Left cardiac atrium (tissue), 4 donors: ENCODE measurements at regions of chr5 and their contacts with region 1.

Region 1: DNA sequence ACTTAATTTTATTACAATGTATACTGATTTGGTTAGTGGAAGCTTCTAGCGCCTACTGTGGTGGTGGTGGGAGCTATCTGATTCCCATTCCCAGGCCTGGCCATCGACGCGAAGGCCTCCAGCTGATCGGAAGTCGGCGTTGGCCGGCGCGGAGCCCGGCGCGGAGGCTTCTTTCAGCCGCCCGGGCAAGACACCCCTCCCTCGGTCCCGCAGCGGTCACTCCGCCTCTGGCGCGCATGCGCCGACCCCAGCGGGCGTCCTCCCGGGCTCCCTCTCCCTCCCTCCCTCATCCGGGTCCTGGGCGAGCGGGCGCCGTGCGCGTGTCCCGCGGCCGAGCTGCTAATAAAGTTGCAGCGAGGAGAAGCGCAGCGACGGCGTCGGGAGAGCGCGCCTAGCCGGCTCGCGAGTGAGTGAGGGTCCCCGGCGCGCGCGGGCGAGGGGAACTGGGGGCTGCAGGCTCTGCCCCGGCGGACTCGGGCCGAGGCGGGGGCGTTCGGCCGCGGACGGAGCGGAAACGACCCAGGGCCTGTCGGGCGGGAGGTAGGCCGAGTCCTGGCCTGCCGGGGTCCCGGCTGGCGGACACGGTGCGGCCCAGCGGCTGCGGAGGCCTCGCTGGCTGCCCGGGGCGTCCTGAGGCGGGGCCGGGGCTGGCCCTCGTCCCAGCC is at the start of gene SMAD5:
- DNase-seq: peak; percentile 97
- ATAC-seq: peak; percentile 99
- total RNA-seq, gene SMAD5: 43.1 to 50.8 TPM

Region 2: GRCh38 chr5:135053278-135053677 is 1079.4 kb before region 1 on chr5:
- intact Hi-C with region 1: no loop called
- DNase-seq: no peak
- ATAC-seq: no peak

Region 3: DNA sequence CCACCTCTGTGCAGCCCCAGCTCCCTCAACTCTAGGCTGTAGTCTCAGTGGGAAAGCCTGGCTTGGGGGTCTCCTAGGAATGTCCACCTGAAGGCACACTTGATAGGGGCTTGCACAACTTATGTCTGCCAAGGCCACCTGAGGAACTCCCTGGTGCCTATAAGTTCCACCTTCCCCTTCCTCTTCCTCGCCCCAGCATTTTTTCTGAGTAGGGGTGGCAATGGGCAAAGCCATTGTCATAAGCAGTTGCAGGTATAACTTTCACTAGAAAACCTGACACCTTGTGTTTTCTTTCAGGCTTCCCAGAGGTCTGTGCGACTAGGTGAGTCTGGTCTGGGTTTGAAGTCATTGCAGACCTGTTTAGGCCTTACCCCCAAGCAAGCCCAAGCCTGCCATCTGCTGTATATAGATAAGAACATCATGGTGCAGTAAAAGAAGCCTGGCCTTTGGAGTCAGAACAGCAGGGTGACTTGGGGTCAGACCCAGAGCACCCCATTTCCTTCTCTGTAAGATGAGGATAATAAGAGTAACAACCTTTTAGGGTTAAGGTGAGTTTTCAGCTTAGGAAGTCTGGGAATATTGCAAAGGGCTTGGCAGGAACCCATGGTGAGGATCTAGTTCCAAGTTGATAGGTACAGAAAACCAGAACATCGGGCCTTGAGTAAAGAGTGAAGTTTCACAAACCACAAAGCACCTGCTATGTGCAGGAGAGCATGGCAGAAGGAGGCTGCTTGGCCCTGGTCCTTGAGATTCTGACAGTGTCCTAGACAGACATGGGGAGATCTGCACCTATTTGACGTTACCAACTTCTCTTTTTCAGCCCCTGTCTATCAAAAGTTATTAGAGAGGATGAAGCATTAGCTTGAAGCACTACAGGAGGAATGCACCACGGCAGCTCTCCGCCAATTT is 70.1 kb before region 1 on chr5:
- intact Hi-C with region 1: no loop called
- DNase-seq: no peak
- ATAC-seq: no peak

Region 4: GRCh38 chr5:136087961-136088871 is 44.5 kb before region 1 on chr5:
- intact Hi-C with region 1: loop called in 1 of 2 experiments (anchors 5 kb)
- DNase-seq: peak; percentile 91
- ATAC-seq: peak; percentile 96 to 97

Region 5: DNA sequence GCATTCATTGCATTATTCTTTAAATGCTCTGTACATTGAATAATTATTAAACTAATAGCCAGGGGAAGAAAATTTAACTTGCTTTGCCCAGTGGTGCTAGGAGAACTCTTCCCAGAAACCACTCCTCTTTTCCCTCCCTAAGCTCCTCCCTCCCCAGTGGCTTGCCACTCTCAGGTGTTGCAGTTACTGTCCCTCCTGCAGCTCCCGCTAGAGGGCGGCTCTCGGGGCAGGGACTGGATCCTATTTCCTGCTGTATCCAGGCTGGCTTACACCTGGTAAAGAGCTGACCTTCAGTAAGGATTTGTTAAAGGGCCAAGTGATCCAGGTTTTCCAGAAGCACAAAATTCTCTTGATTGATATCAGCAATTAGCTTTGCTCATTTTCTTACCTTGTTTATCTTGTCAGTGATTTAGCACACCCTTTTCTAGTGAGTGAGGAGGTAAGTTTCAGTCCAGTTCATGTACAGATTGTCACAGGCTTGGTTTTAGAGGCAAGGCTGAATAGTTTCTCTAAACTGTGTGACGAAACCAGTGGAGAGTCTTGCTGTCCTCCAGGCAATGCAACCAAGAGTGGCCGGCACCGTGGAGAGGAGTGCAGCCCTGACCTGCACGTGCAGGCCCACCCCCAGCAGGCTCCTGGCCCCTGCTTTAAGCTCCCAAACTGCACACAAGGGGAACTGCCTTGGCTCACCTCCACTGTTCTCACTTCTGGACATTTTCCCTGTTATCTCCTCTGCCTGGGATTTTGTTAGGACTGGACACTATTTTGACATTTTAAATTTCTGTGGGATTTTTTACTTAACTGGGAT is 942.7 kb after region 1 on chr5:
- intact Hi-C with region 1: no loop called
- DNase-seq: peak; percentile 56
- ATAC-seq: peak in 1 of 2 donors; percentile 27